ENCODE measurements at regions of chr3 and their contacts with region 1.

Region 1: GRCh38 chr3:189961525-189962161 is 159.1 kb downstream of the P3H2 start:
- DNase-seq: peak; percentile 61 to 79
- H3K4me3 ChIP-seq: no peak overlapping the region
- H3K4me3 Mint-ChIP-seq: no peak overlapping the region
- H3K27ac Mint-ChIP-seq: no peak overlapping the region
- H3K4me1 ChIP-seq: no peaks in the 10 kb centered on the region
- H3K4me1 Mint-ChIP-seq: no peaks in the 10 kb centered on the region
- H3K27me3 ChIP-seq: no peaks in the 10 kb centered on the region
- H3K27me3 Mint-ChIP-seq: no peaks in the 10 kb centered on the region
- CTCF ChIP-seq: peak; percentile 82 to 90

Region 2: GRCh38 chr3:190205739-190206138 is 244.1 kb after region 1 on chr3:
- CTCF ChIA-PET with region 1: interaction called, 9 read pairs
- POLR2A ChIA-PET with region 1: no interaction called
- intact Hi-C with region 1: loop called (anchors 1 kb)
- DNase-seq: no peak
- H3K4me3 ChIP-seq: no peak overlapping the region
- H3K4me3 Mint-ChIP-seq: no peak overlapping the region
- H3K27ac Mint-ChIP-seq: no peak overlapping the region
- H3K4me1 ChIP-seq: peaks cover 4% of the 10 kb centered on the region; the same call in 1 of the 2 replicates
- H3K4me1 Mint-ChIP-seq: peaks cover 6% of the 10 kb centered on the region
- H3K27me3 ChIP-seq: no peaks in the 10 kb centered on the region
- H3K27me3 Mint-ChIP-seq: no peaks in the 10 kb centered on the region
- CTCF ChIP-seq: no peak

Region 3: DNA sequence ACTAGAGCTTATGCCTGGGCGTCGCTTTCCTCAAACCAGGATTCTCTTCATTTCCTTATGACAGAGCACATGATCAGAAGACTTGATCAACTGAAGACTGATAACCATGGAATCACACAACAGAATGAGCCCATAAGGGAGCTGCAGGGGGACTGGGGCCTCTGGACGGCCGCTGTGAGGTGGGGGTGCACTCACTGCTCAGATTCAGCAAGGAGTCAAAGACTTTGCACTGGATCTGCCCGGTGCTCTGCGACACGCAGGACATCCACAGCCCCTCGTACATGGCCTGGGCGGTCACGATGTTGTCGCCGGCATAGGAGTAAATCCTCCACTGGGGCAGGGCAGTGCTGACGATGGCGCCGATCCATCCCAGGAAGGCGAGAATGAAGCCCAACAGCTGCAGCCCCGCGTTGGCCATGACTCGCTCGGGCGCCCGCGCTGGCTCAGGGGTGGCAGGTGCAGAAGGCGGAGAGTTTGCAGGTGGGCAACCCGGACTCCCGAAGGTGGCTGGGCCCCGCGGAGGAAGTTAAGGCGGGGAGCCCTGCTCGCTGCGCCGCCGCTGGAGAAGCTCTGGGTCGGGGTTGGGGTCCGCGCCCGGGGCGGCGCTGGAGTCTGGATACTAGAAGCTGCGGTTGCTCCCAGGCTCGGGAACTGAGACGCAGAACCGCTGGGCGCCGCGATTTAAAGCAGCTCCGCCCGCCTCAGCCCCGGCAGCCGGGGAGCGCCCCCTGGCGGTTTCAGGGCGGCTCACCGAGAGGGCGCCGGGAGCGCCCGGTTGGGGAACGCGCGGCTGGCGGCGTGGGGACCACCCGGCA is 360.4 kb after region 1 on chr3 and contains the start of gene CLDN1:
- CTCF ChIA-PET with region 1: interaction called, 6 read pairs
- POLR2A ChIA-PET with region 1: no interaction called
- intact Hi-C with region 1: loop called (anchors 1 kb)
- DNase-seq: peak; percentile 83 to 92
- H3K4me3 ChIP-seq: peak within 1 kb of the TSS; percentile 66
- H3K4me3 Mint-ChIP-seq: peak within 1 kb of the TSS; percentile 81
- H3K27ac Mint-ChIP-seq: peak within 1 kb of the TSS; percentile 56
- H3K4me1 ChIP-seq: peaks cover 9% of the 10 kb centered on the region
- H3K4me1 Mint-ChIP-seq: peaks cover 29% of the 10 kb centered on the region
- H3K27me3 ChIP-seq: no peaks in the 10 kb centered on the region
- H3K27me3 Mint-ChIP-seq: no peaks in the 10 kb centered on the region
- CTCF ChIP-seq: peak; percentile 92 to 96
- total RNA-seq, gene CLDN1: 38.9 and 39.3 TPM in 2 replicates

Region 4: GRCh38 chr3:190424478-190425439 is 463.1 kb after region 1 on chr3:
- CTCF ChIA-PET with region 1: interaction called, 3 read pairs
- POLR2A ChIA-PET with region 1: no interaction called
- intact Hi-C with region 1: loop called (anchors 1 kb)
- DNase-seq: peak; percentile 75 to 76
- H3K4me3 ChIP-seq: no peak overlapping the region
- H3K4me3 Mint-ChIP-seq: no peak overlapping the region
- H3K27ac Mint-ChIP-seq: no peak overlapping the region
- H3K4me1 ChIP-seq: no peaks in the 10 kb centered on the region
- H3K4me1 Mint-ChIP-seq: no peaks in the 10 kb centered on the region
- H3K27me3 ChIP-seq: no peaks in the 10 kb centered on the region
- H3K27me3 Mint-ChIP-seq: peaks cover 2% of the 10 kb centered on the region
- CTCF ChIP-seq: peak; percentile 57 to 66

Region 5: GRCh38 chr3:190644753-190645152 is 683.1 kb after region 1 on chr3:
- CTCF ChIA-PET with region 1: no interaction called
- POLR2A ChIA-PET with region 1: no interaction called
- intact Hi-C with region 1: no loop called
- DNase-seq: no peak
- H3K4me3 ChIP-seq: no peak overlapping the region
- H3K4me3 Mint-ChIP-seq: no peak overlapping the region
- H3K27ac Mint-ChIP-seq: no peak overlapping the region
- H3K4me1 ChIP-seq: 0 out of 2 replicates have a peak, but pooled peaks cover 3% of the 10 kb centered on the region
- H3K4me1 Mint-ChIP-seq: no peaks in the 10 kb centered on the region
- H3K27me3 ChIP-seq: no peaks in the 10 kb centered on the region
- H3K27me3 Mint-ChIP-seq: peaks cover 7% of the 10 kb centered on the region
- CTCF ChIP-seq: no peak

Measured in Caco-2 (cell line).